Transverse colon (tissue), 4 donors: ENCODE measurements at regions of chr14 and their contacts with region 1.

Region 1: GRCh38 chr14:51006781-51007211 is 62.5 kb upstream of the PYGL start:
- DNase-seq: no peak
- H3K4me3 ChIP-seq: no peak overlapping the region
- H3K27ac ChIP-seq: peak overlapping the region in 1 of 4 donors; percentile 19
- H3K4me1 ChIP-seq: peaks cover 0 to 23% (median 11%) of the 10 kb centered on the region in 4 donors
- H3K27me3 ChIP-seq: no peaks in the 10 kb centered on the region
- CTCF ChIP-seq: no peak
- EP300 ChIP-seq: no peak
- POLR2A ChIP-seq: no peak

Region 2: DNA sequence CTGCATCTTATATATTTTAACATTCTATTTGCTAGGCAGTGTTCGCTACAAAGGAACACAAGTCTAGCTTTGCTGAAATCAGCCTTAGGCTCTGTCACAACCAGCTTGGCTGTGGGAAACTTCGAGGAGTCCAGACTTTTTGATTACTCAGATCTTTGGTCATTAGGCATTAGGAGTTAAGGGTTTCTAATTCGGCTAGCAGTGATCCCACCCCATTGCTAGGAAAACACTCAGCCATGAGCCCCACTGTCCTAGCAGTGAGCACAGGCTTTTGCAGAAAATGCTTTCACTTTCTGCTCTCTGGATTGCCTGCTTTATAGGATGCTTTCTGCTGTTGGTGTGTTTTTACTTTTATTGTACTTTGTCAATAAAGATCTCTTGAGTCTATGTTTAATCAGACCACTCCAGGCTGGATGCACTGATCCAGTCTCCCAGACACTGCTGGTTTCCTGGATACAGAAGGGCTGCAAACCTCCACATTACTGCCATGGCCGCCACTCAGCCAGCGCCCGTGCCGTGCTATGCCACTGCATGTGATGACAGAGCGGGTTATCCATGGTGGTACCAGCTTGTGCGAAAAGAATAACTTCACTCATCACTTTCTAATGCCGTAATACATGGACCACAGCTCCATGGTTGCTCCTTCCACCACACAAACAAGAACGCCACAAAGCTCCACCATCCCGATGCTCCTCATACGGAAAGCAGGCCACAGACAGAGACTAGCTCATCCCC is 21.5 kb before region 1 on chr14:
- in situ Hi-C with region 1: no loop called
- intact Hi-C with region 1: loop called (anchors 1 kb)
- DNase-seq: no peak
- H3K4me3 ChIP-seq: no peak overlapping the region
- H3K27ac ChIP-seq: no peak overlapping the region
- H3K4me1 ChIP-seq: no peaks in the 10 kb centered on the region
- H3K27me3 ChIP-seq: no peaks in the 10 kb centered on the region
- CTCF ChIP-seq: no peak
- EP300 ChIP-seq: no peak
- POLR2A ChIP-seq: no peak

Region 3: GRCh38 chr14:51094901-51095853 is 88.4 kb after region 1 on chr14 and contains the start of gene TRIM9:
- in situ Hi-C with region 1: no loop called
- intact Hi-C with region 1: no loop called
- DNase-seq: peak; percentile 96
- H3K4me3 ChIP-seq: peak within 1 kb of the TSS; percentile 38 to 93 (median 52)
- H3K27ac ChIP-seq: peak within 1 kb of the TSS; percentile 70 to 84 (median 80)
- H3K4me1 ChIP-seq: peaks cover 0 to 26% (median 22%) of the 10 kb centered on the region in 4 donors
- H3K27me3 ChIP-seq: peaks cover 28% of the 10 kb centered on the region
- CTCF ChIP-seq: no peak
- EP300 ChIP-seq: no peak
- POLR2A ChIP-seq: peak; percentile 25
- total RNA-seq, gene TRIM9: 9.2 to 21.3 (median 16.1) TPM